ENCODE measurements at regions of chr6 and their contacts with region 1.

Region 1: DNA sequence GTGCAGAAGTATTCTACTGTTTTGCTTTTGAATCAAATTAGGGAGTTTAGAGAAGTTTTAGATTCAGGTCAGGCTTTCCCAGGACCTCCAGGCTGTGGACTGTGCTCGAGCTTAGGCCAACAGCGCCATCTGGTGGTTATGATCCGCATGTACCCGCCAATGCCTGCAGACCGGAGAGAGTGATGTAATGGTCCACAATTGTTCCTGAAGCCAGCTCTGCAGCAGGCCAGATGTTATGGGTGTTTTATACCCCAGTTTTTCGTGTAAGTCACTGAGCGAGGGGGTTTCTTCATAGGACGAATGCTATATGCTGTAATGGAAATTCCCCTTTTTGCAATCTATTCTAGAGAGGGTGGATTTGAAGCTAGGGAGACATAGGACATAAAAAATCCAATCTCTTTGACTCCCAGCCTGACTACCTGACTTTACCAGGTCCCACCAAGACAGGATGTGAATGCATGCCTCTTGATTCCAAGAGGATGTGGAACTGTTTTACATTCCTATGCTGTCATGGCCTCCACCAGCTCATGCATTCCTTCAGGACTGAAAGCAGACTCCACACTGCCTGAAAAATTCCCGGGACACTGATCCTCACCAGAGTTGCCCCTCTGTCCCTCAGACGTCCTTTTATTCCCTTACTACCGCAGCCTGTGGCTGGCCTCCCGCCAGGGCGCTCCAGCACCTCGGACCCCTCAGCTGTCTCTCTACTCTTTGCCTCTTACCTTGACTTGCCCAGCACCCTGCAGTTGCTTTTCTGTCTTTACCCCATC is 41.2 kb upstream of the LY86 start:
- DNase-seq: peak; percentile 85 to 96
- H3K4me3 ChIP-seq: peak overlapping the region; percentile 29 to 45 (median 42)
- H3K27ac ChIP-seq: peak overlapping the region in 1 of 5 donors; percentile 3
- H3K4me1 ChIP-seq: peaks cover 13 to 17% (median 14%) of the 10 kb centered on the region in 4 donors
- H3K27me3 ChIP-seq: peaks cover 0 to 66% (median 33%) of the 10 kb centered on the region in 3 donors
- CTCF ChIP-seq: peak in 6 of 7 experiments; percentile 51 to 91 (median 87)
- EP300 ChIP-seq: no peak
- POLR2A ChIP-seq: no peak

Region 2: DNA sequence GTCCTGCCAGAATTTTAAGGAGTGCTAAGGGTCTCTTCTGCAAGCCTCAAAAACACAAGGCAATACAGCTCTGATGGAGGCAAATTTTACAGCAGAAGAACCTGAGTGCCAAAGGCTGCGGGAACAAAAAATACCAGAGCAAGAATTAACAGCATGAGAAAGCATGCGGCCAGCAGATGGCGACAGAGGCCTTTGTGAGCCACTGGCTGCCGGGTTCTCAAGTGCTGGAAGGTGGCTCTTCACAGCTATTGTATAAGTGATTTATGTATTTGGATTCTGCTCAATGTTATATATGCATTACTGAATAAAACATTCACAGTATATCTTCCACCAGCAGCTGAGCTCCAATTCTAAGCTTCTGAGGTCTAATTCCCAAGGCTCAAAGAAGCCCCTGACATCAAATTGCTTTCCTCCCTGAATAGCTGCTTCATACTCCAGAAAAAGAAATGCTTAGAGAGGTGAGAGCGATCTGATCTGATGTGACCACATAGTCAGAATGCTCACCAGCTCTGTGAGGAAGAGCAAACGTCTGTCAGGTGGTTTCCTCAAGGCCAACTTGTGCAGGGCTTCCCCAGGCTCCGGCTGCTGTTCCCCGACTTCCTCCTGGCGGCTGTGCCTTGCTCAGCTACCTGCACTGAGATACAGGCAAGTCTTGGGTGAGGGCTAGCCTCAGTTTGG is 1403.5 kb before region 1 on chr6:
- intact Hi-C with region 1: loop called (anchors 10 kb)
- DNase-seq: peak; percentile 89 to 95
- H3K4me3 ChIP-seq: no peak overlapping the region
- H3K27ac ChIP-seq: no peak overlapping the region
- H3K4me1 ChIP-seq: peaks cover 0 to 9% (median 1%) of the 10 kb centered on the region in 4 donors
- H3K27me3 ChIP-seq: no peaks in the 10 kb centered on the region
- CTCF ChIP-seq: peak in 5 of 7 experiments; percentile 65 to 85 (median 83)
- EP300 ChIP-seq: no peak
- POLR2A ChIP-seq: no peak

Region 3: DNA sequence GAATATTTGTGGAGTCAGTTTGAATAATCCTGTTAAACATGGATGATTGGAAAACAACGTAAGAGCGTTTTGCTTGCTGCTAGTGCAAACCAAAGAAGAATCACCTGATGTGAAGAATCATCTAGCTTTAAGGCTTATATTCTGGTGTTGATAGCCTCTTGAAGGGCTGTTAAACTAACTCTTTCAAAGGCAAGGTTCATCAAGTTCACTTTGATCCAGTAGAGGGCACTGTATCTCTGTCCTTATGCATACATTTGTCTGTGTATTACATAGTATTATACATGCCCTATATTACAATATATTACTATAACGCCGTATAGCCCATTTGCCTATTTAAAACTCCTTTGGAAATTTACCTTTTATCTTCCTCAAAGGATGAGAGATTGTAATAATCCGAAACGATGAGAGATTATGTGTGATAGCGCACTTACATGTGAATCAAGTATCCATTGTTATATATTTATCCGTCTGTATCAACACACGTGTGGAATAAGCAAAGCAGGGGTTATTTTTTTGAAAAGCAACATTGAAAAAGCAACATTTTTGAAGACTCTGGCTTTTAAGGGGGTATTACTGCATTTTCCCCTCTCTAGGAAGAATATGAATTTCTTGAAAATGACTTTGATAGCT is 489.8 kb before region 1 on chr6:
- intact Hi-C with region 1: loop called (anchors 10 kb)
- DNase-seq: peak in 1 of 2 donors; percentile 78
- H3K4me3 ChIP-seq: no peak overlapping the region
- H3K27ac ChIP-seq: no peak overlapping the region
- H3K4me1 ChIP-seq: no peaks in the 10 kb centered on the region
- H3K27me3 ChIP-seq: peaks cover 0 to 15% (median 14%) of the 10 kb centered on the region in 3 donors
- CTCF ChIP-seq: peak in 3 of 7 experiments; percentile 25 to 35 (median 33)
- EP300 ChIP-seq: no peak
- POLR2A ChIP-seq: no peak

Region 4: DNA sequence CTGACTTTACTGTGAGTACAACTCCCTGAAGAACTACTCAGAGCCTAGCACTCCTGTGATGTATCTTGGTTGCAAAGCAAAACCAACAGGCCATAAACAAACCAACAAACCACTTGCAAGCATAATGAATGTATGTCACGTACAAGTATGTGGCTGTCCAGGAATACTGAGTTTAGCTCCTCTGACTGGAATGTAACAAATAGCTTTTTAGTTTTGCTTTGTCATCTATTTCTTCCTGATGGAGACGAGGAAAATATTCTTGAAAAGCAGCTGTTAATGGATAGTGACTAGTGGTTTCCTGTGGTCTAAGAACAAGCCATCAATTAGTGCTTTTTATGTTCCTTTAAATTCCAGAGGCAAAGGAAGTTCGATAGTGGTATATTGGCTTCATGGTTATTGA is 60.7 kb before region 1 on chr6:
- intact Hi-C with region 1: no loop called
- DNase-seq: no peak
- H3K4me3 ChIP-seq: no peak overlapping the region
- H3K27ac ChIP-seq: no peak overlapping the region
- H3K4me1 ChIP-seq: no peaks in the 10 kb centered on the region
- H3K27me3 ChIP-seq: peaks cover 0 to 11% (median 0%) of the 10 kb centered on the region in 3 donors
- CTCF ChIP-seq: no peak
- EP300 ChIP-seq: no peak
- POLR2A ChIP-seq: no peak

Region 5: GRCh38 chr6:6927521-6928371 is 380.5 kb after region 1 on chr6:
- intact Hi-C with region 1: no loop called
- DNase-seq: peak in 1 of 2 donors; percentile 31
- H3K4me3 ChIP-seq: peak overlapping the region in 1 of 4 donors; percentile 7
- H3K27ac ChIP-seq: no peak overlapping the region
- H3K4me1 ChIP-seq: peaks cover 0 to 11% (median 8%) of the 10 kb centered on the region in 4 donors
- H3K27me3 ChIP-seq: no peaks in the 10 kb centered on the region
- CTCF ChIP-seq: no peak
- EP300 ChIP-seq: no peak
- POLR2A ChIP-seq: no peak